ENCODE measurements at regions of chr19 and their contacts with region 1.

Region 1: GRCh38 chr19:38514812-38515633 is 81.5 kb downstream of the RYR1 start:
- DNase-seq: peak; percentile 71 to 78 (median 73)
- ATAC-seq: peak; percentile 89
- H3K4me3 ChIP-seq: no peak overlapping the region
- H3K27ac ChIP-seq: no peak overlapping the region
- H3K4me1 ChIP-seq: peaks cover 7% of the 10 kb centered on the region
- H3K27me3 ChIP-seq: no peaks in the 10 kb centered on the region
- CTCF ChIP-seq: peak; percentile 81 to 93 (median 87)
- POLR2A ChIP-seq: no peak

Region 2: GRCh38 chr19:38425810-38426466 is 89.1 kb before region 1 on chr19 and contains the start of gene RASGRP4:
- intact Hi-C with region 1: no loop called
- DNase-seq: peak in 1 of 4 donors; percentile 28
- ATAC-seq: no peak
- H3K4me3 ChIP-seq: no peak within 1 kb of the TSS
- H3K27ac ChIP-seq: no peak within 1 kb of the TSS
- H3K4me1 ChIP-seq: no peaks in the 10 kb centered on the region
- H3K27me3 ChIP-seq: peaks cover 0 to 3% of the 10 kb centered on the region in 2 donors
- CTCF ChIP-seq: no peak
- POLR2A ChIP-seq: no peak
- total RNA-seq, gene RASGRP4: 1.6 to 4.6 TPM

Region 3: DNA sequence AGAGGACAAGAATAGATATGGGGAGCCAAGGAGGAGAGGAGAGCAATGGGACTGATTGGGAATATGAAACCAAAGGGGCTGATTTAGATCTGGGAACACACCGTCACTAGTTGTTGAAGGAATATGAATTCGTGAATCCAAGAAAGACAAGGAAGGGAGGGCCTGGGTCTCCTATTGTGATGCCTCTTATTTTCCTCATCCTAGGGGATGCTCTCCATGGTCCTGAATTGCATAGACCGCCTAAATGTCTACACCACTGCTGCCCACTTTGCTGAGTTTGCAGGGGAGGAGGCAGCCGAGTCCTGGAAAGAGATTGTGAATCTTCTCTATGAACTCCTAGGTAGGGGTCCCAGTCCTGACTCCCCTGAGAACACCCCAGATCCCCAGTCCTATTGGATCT is 60.0 kb before region 1 on chr19:
- intact Hi-C with region 1: no loop called
- DNase-seq: no peak
- ATAC-seq: no peak
- H3K4me3 ChIP-seq: no peak overlapping the region
- H3K27ac ChIP-seq: no peak overlapping the region
- H3K4me1 ChIP-seq: no peaks in the 10 kb centered on the region
- H3K27me3 ChIP-seq: no peaks in the 10 kb centered on the region
- CTCF ChIP-seq: no peak
- POLR2A ChIP-seq: no peak

Region 4: GRCh38 chr19:38634757-38635482 is 119.9 kb after region 1 on chr19:
- intact Hi-C with region 1: loop called (anchors 10 kb)
- DNase-seq: peak; percentile 73 to 82 (median 77)
- ATAC-seq: peak; percentile 63
- H3K4me3 ChIP-seq: no peak overlapping the region
- H3K27ac ChIP-seq: peak overlapping the region in 1 of 4 donors; percentile 17
- H3K4me1 ChIP-seq: no peaks in the 10 kb centered on the region
- H3K27me3 ChIP-seq: no peaks in the 10 kb centered on the region
- CTCF ChIP-seq: peak; percentile 77 to 92 (median 87)
- POLR2A ChIP-seq: no peak